Activated naive CD4-positive, alpha-beta T cell treated with anti-CD3 and anti-CD28 coated beads for 36 hours (primary cell): ENCODE measurements at regions of chr22 and their contacts with region 1.

Region 1: DNA sequence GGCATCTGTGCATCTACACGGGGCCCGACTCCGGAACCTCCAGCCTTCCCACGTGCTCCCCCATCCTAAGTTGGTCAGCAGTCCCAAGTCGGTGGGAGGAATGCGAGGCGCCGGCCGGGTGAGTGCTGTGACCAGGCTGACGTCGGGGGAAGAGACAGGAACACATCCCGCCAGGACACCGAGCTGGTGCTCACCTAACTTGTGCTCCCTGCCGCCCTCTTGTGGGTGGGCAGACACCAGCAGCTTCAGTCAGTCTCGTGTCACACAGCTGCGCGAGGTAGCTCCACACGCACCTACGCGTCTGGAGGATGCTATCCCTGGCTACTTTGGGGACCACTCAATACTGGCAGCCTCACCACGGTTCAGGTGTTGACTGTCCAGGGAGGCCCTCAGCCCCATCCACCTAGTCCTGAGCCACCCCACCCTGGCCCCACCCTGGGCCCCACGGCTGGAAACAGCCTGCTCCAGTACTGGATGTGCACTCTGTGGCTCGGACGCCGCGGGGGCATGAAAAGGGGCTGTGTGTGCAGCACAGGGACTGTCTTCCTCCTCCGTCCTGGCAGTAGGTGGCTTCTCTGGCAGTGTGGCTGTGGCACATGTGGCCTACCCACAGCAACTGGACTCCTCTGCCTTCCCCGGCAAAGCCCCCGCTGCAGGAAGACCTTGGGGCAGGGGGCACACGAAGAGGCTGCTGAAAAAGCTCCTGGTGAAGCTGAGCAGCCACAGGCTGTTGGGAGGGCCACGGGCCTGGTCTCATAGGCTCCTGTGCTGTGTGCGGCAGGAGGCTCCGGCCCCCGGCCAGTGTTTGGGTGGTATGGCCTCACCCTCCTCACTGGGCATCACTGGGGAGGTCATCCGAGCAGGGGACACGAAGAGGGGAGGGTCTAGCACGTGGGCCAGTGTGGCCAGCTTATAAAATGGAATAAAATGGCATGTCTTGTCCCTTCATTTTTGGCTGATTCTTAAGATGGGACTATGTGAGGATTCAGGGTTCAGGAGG is 11.2 kb upstream of the BID start:
- DNase-seq: peak; percentile 76
- H3K4me3 Mint-ChIP-seq: no peak overlapping the region
- H3K27ac Mint-ChIP-seq: no peak overlapping the region
- H3K4me1 Mint-ChIP-seq: peaks cover 20% of the 10 kb centered on the region
- H3K27me3 Mint-ChIP-seq: no peaks in the 10 kb centered on the region

Region 2: DNA sequence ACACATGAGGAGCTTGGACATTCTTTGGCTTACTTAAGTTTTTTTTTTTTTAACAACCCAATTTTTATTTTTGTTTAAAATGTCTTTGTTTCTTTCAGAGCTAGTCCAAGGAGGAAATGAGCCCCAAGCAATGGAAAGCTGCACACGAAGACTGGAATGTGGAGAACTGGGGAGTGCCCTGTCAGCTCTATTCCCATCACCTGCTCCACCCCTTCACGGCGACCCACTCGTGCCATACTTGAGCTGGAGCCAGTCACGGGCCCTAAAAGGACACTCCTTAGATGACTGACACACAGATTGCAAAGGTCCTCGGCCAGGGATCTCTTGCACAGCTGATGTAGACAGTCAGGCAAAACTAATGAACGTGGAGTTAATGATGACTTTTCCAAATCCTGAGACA is 232.7 kb before region 1 on chr22:
- CTCF ChIA-PET with region 1: no interaction called
- intact Hi-C with region 1: loop called (anchors 10 kb)
- DNase-seq: no peak
- H3K4me3 Mint-ChIP-seq: no peak overlapping the region
- H3K27ac Mint-ChIP-seq: no peak overlapping the region
- H3K4me1 Mint-ChIP-seq: no peaks in the 10 kb centered on the region
- H3K27me3 Mint-ChIP-seq: no peaks in the 10 kb centered on the region

Region 3: DNA sequence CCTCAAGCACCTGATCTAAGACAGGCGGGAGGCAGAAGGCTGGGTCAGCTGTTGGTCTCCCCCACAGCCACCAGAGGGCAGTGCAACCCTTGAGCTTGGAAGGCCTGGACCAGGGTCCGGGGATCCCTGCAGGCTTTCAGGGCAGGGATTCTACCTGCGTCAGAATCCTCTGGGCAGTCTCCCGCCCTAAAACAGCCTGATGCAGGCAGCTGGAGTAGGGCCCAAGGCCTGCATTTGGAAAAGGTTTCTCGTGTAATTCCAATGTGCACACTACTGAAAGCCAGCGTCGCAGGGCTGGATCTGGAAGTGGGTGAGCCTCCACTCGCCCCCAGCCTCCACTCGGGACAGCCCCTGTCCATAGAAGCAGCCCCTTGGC is 43.0 kb before region 1 on chr22:
- CTCF ChIA-PET with region 1: interaction called, 112 read pairs
- intact Hi-C with region 1: loop called (anchors 1 kb)
- DNase-seq: peak; percentile 79
- H3K4me3 Mint-ChIP-seq: no peak overlapping the region
- H3K27ac Mint-ChIP-seq: no peak overlapping the region
- H3K4me1 Mint-ChIP-seq: peaks cover 4% of the 10 kb centered on the region
- H3K27me3 Mint-ChIP-seq: no peaks in the 10 kb centered on the region

Region 4: GRCh38 chr22:17767233-17768065 is 18.0 kb before region 1 on chr22:
- CTCF ChIA-PET with region 1: interaction called, 18 read pairs
- intact Hi-C with region 1: loop called (anchors 1 kb)
- DNase-seq: peak; percentile 73
- H3K4me3 Mint-ChIP-seq: peak overlapping the region; percentile 11
- H3K27ac Mint-ChIP-seq: no peak overlapping the region
- H3K4me1 Mint-ChIP-seq: peaks cover 58% of the 10 kb centered on the region
- H3K27me3 Mint-ChIP-seq: no peaks in the 10 kb centered on the region

Region 5: GRCh38 chr22:17853073-17853472 is 67.6 kb after region 1 on chr22:
- CTCF ChIA-PET with region 1: no interaction called
- intact Hi-C with region 1: no loop called
- DNase-seq: no peak
- H3K4me3 Mint-ChIP-seq: no peak overlapping the region
- H3K27ac Mint-ChIP-seq: no peak overlapping the region
- H3K4me1 Mint-ChIP-seq: no peaks in the 10 kb centered on the region
- H3K27me3 Mint-ChIP-seq: no peaks in the 10 kb centered on the region

Region 6: DNA sequence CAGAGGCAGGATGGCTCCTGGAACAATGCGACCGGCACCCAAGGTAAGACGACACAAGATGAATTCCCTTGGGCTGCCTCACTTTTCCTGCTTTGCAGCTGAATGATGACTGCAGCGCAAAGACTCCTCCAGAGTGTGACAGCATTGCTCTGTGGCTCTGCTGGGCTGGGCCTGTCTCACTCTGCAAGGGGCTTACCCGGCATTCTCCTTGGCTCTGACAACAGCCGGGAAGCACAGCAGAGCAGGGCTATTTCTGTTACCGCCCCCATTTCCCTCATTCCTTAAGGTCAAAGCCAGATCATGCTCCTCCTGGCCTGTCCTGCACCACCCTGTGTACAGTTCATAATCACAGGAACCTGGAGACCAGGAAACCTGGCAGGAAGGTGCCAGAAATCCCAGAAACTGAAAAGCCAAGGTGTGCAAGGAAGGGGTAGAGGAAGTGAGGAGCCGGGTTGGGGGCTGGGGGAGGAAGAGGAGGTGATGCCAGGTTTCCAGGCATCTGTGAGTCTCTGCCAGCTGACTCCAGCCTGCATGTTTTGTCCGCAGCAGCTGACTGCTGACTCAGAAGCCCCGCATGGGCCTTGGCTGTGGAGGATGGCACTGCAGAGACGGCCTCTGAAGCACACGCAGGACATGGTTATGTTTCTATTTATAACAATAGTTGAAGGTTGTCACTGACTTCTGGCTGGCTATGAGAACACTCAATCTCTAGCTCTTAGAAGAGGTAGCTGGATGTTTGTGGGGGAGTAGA is 125.3 kb after region 1 on chr22:
- CTCF ChIA-PET with region 1: no interaction called
- intact Hi-C with region 1: no loop called
- DNase-seq: no peak
- H3K4me3 Mint-ChIP-seq: no peak overlapping the region
- H3K27ac Mint-ChIP-seq: no peak overlapping the region
- H3K4me1 Mint-ChIP-seq: no peaks in the 10 kb centered on the region
- H3K27me3 Mint-ChIP-seq: no peaks in the 10 kb centered on the region